HEK293 (cell line): ENCODE measurements at regions of chr5 and their contacts with region 1.

Region 1: GRCh38 chr5:38420691-38421390 is 135.6 kb downstream of the LIFR start:
- H3K4me3 ChIP-seq: no peak overlapping the region
- H3K27ac ChIP-seq: no peak overlapping the region
- H3K4me1 ChIP-seq: peaks cover 14% of the 10 kb centered on the region
- CTCF ChIP-seq: peak; percentile 68

Region 2: DNA sequence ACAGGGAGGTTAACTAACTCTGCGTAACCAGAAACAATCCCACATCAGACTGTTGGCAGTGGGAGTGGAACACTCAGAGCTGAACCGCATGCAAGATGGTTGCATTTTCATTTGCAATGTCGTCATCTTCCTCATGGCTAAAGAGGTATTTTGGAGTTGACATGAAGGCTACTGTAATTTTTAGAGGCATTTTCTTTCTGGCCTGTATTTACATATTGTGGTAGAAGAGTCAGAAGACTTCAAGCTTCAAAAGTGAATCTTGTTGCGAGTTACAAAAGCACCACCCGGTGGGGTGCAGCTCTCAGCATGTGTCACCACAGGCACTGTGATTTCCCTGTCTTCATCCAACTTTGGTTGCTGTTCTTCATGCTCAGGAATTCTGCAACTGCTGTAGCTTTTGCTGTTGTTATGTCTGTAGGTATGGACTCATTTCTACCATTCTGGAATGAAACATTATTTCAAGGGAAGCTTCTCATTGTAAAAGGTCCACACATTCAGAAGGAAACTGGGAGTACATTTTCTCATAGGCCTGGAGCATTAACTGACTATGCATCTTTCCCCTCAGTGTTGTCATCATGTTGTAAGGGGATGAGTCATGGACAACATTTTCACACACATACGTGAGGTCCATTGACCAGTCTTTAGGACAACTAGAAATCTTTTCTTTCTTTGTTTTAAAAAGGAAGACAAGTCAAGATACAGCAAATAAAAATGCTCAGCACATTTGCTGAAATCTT is 545.6 kb before region 1 on chr5:
- CTCF ChIA-PET with region 1: no interaction called
- POLR2A ChIA-PET with region 1: no interaction called
- H3K4me3 ChIP-seq: no peak overlapping the region
- H3K27ac ChIP-seq: no peak overlapping the region
- H3K4me1 ChIP-seq: no peaks in the 10 kb centered on the region
- CTCF ChIP-seq: no peak

Region 3: GRCh38 chr5:38208782-38209378 is 212.0 kb before region 1 on chr5:
- CTCF ChIA-PET with region 1: interaction called, 13 read pairs
- POLR2A ChIA-PET with region 1: no interaction called
- H3K4me3 ChIP-seq: no peak overlapping the region
- H3K27ac ChIP-seq: no peak overlapping the region
- H3K4me1 ChIP-seq: no peaks in the 10 kb centered on the region
- CTCF ChIP-seq: peak; percentile 67

Region 4: GRCh38 chr5:38404667-38405276 is 16.1 kb before region 1 on chr5:
- CTCF ChIA-PET with region 1: interaction called, 17 read pairs
- POLR2A ChIA-PET with region 1: no interaction called
- H3K4me3 ChIP-seq: no peak overlapping the region
- H3K27ac ChIP-seq: no peak overlapping the region
- H3K4me1 ChIP-seq: no peaks in the 10 kb centered on the region
- CTCF ChIP-seq: 0 out of 2 replicates have a peak, but pooled peaks have one; percentile 10

Region 5: DNA sequence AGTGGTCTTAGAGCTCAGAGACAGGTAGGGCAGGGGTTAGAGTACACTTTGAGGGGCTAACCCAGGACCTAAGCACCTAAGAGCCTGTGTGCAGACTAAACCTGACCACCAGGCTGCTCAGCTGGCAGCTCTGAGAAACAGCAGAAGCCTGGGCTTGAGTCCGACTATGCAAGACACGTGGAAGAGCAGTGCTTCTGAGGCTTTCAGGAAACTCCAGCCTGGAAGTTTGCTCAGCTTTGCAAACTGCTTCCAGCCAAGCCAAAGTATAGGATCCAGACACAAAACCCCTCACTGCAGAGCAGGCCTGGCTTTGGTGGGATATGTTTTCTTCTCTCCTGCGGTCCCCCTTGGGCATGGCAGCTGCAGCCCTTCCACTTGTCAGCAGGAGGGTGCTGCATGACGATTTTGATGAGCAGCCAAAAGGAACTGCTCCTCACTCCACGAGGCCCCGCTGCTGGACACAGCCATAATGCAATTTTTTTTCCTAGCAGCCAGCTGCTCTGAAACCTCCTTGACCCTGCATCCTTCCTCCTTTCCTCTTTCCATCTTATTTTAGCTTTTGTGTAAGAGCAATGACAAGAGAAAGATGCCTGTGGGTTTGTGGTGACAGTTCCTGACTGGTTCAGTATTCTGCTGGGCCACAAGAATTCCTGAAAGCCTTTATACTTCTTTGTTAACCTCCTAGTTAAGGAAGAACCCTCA is 12.5 kb after region 1 on chr5:
- CTCF ChIA-PET with region 1: interaction called, 21 read pairs
- POLR2A ChIA-PET with region 1: no interaction called
- H3K4me3 ChIP-seq: no peak overlapping the region
- H3K27ac ChIP-seq: no peak overlapping the region
- H3K4me1 ChIP-seq: no peaks in the 10 kb centered on the region
- CTCF ChIP-seq: no peak

Region 6: GRCh38 chr5:38551030-38552017 is 130.5 kb after region 1 on chr5:
- CTCF ChIA-PET with region 1: interaction called, 11 read pairs
- POLR2A ChIA-PET with region 1: no interaction called
- H3K4me3 ChIP-seq: no peak overlapping the region
- H3K27ac ChIP-seq: no peak overlapping the region
- H3K4me1 ChIP-seq: peaks cover 35% of the 10 kb centered on the region
- CTCF ChIP-seq: peak; percentile 64; the same call in 1 of the 2 replicates